ENCODE measurements at regions of chr17 and their contacts with region 1.

Region 1: DNA sequence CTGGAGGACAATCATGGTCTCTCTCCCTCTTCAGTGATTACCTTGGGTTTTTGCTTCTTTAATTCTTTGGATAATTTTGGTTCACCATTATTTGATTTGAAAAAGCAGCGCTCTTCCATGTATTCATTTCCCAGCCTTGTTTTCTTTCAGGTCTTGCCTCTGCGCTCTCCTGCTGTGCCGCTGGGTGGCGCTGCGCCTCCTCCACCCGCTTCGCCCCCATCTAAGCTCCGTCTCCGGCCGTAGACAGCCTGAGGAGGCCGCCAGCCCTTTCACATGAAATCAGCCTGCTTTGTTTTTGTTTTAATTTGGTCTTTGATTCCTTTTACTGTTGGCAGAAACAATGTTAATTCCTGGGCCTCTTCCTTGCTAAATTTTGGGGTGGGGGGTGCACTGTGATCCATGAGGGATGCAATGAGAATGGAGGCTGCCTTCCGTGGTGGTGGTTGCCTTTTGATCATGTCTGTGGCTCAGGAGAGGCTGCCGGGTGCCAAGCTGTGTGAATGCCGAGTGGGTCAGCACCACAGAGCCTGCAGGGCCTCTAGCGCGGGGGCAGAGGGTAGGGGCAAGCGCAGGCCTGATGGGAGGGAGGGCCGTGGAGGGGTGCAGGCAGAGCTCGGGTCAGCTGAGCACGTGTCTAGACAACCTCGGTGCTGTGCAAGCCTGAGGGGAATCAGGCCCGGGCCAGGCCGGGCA is 64.1 kb downstream of the PLD6 start:
- DNase-seq: no peak
- H3K4me3 ChIP-seq: no peak overlapping the region
- CTCF ChIP-seq: peak; percentile 84

Region 2: DNA sequence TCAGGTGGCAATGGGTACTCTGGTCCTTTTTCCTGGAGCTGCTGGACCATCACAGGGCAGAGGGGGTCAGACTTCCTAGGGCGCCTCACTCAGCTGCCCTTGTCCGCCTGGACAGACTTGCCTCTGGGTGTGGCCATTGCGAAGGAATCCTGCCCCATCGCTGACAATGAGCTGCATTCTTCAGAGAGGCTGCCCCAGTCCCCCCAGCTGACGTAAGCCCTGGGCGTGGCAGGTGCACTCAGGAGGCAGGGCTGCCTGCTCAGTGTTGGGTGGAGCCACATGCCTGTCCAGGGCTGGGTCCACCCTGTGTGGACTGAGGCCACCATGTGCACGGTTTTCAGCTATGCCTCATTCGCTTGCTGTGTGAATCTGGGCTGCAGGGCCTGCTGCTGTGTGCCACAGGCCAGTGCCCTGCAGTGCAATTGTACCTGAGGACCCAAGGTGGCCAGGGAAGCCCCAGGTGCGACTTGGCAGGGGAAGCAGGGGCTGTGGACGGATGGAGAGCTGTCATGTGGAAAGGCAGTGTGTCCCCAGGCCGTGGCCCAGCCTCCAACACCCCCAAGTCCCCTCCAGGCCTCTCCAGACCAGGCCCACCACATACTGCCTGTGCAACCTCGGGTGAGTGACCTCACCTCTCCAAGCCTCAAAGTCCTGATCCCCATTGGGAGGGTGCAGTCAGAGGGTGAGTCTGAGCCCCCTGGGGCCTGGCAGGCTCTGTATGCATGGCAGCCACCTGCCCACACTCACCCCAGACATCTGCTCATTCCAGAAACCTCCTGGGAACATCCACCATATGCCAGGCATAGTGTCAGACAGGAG is 113.7 kb before region 1 on chr17:
- CTCF ChIA-PET with region 1: interaction called, 10 read pairs
- POLR2A ChIA-PET with region 1: no interaction called
- DNase-seq: no peak
- H3K4me3 ChIP-seq: no peak overlapping the region
- CTCF ChIP-seq: no peak

Region 3: GRCh38 chr17:17119533-17119932 is 22.5 kb before region 1 on chr17:
- CTCF ChIA-PET with region 1: interaction called, 22 read pairs
- POLR2A ChIA-PET with region 1: no interaction called
- DNase-seq: no peak
- H3K4me3 ChIP-seq: no peak overlapping the region
- CTCF ChIP-seq: no peak

Region 4: DNA sequence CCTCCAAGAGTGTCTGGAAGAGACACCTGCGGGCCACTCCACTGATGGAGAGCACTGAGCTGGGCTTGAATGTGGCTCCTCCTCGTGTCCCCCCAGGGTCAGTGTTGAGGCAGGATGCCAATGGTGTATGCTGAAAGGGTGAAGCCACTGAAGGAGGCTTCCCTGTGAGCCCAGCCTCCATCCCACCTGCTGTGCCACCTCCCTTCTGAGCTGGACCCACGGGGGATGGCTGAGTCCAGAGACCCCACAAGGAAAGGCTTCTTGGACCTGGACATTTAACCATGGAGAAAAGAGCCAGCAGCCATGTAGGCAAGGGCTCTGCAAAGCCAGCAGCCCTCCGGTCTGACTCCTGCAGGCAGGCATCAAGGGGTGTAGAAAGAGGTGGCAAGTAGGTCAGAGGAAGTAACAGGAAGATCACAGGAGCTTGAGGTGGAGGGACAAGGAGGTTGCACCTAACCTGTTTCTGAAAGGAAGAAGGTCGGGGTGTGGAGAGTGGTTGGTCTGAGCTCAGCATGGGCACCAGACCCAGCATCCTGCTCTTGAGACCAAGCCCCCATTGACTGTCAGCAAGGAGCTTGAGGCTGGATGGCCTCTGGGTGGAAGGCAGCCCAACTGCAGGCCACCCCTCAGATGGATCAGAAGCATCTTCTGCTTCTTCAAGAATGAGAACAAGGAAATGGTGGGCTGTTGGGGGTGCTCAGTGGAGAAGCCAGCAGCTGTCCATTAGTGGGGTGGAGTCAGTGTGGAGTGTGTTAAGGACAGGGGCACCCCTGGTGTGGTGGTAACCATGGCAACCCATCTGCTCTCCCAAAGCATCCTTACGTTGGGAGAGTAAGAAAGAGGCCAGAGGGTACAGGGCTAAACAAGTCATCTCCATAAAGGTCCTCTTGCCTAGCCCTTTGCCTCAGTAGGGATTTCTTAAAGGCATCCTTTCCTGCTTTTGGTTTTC is 16.6 kb before region 1 on chr17:
- CTCF ChIA-PET with region 1: interaction called, 31 read pairs
- POLR2A ChIA-PET with region 1: no interaction called
- DNase-seq: no peak
- H3K4me3 ChIP-seq: no peak overlapping the region
- CTCF ChIP-seq: no peak